ENCODE measurements at regions of chr16 and their contacts with region 1.

Region 1: GRCh38 chr16:3150346-3151218 is 15.8 kb downstream of the ZNF213 start:
- DNase-seq: peak; percentile 100
- H3K4me3 Mint-ChIP-seq: peak overlapping the region; percentile 88
- H3K27ac Mint-ChIP-seq: peak overlapping the region; percentile 89
- H3K4me1 Mint-ChIP-seq: peaks cover 27% of the 10 kb centered on the region
- H3K27me3 Mint-ChIP-seq: peaks cover 9% of the 10 kb centered on the region

Region 2: GRCh38 chr16:3106205-3106928 is 44.2 kb before region 1 on chr16:
- intact Hi-C with region 1: loop called (anchors 1 kb)
- DNase-seq: peak; percentile 97
- H3K4me3 Mint-ChIP-seq: peak overlapping the region; percentile 88
- H3K27ac Mint-ChIP-seq: peak overlapping the region; percentile 90
- H3K4me1 Mint-ChIP-seq: peaks cover 22% of the 10 kb centered on the region
- H3K27me3 Mint-ChIP-seq: peaks cover 2% of the 10 kb centered on the region

Region 3: GRCh38 chr16:3171855-3172593 is 21.4 kb after region 1 on chr16:
- intact Hi-C with region 1: loop called (anchors 1 kb)
- DNase-seq: peak; percentile 76
- H3K4me3 Mint-ChIP-seq: peak overlapping the region; percentile 80
- H3K27ac Mint-ChIP-seq: peak overlapping the region; percentile 83
- H3K4me1 Mint-ChIP-seq: peaks cover 34% of the 10 kb centered on the region
- H3K27me3 Mint-ChIP-seq: peaks cover 67% of the 10 kb centered on the region

Region 4: GRCh38 chr16:3264137-3265036 is 113.8 kb after region 1 on chr16:
- intact Hi-C with region 1: no loop called
- DNase-seq: peak; percentile 98
- H3K4me3 Mint-ChIP-seq: peak overlapping the region; percentile 85
- H3K27ac Mint-ChIP-seq: peak overlapping the region; percentile 94
- H3K4me1 Mint-ChIP-seq: peaks cover 15% of the 10 kb centered on the region
- H3K27me3 Mint-ChIP-seq: no peaks in the 10 kb centered on the region

Region 5: DNA sequence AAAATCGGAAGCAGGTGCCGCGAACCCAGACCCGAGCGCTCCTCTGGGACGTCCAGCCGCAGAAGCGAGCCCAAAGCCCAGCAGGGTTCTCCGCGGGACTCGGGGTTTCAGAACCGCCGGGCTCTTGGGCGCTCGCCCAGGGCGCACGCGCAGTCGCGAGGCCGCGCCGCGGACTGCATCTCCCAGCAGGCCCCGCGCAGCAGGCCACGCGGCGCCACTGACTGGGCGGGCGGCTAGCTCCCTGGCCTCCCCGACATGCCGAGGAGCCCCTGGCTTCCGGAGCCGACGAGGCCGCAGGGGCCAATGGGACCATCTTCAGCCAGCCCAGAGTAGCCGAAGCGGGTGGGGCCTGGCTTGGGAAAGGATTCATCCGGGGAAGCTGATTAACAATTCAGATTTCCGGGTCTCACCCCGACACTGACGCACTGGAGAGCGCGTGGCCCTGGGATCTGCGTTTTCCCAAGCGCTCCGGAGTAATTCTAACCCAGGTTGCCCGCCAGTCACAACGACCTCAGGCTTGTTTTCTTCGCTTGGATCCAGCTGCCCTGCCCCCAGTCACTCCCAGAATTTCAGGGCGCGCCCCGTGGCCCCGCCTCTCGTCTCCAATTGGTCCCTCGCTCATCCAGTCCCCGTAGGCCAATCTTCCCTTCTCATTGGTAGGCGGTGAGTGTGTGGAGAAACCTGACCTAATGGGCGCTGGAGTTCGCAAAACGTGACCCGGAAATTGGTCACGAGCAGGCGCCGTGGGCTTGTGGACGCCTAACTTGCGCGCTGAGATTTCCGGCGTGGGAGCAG is 132.3 kb after region 1 on chr16 and contains the start of gene ZNF263:
- intact Hi-C with region 1: loop called (anchors 5 kb)
- DNase-seq: peak; percentile 98
- H3K4me3 Mint-ChIP-seq: peak within 1 kb of the TSS; percentile 88
- H3K27ac Mint-ChIP-seq: peak within 1 kb of the TSS; percentile 98
- H3K4me1 Mint-ChIP-seq: peaks cover 18% of the 10 kb centered on the region
- H3K27me3 Mint-ChIP-seq: peaks cover 4% of the 10 kb centered on the region
- total RNA-seq, gene ZNF263: 27.0 and 31.3 TPM in 2 replicates

Region 6: DNA sequence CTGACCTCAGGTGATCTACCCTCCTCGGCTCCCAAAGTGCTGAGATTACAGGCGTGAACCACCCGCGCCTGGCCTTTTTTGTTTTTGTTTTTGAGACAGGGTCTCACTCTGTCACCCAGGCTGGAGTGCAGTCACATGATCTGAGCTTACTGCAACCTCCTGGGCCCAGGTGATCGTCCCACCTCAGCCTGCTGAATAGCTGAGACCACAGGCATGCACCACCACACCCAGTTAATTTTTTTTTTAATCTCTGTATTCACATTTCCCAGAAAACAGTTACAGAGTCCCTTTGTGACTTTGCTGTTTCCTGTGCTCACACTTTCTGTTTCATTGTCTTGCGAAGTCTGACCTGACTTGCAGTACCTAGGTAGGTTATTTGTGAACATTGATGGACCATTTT is 352.9 kb after region 1 on chr16:
- intact Hi-C with region 1: loop called (anchors 1 kb)
- DNase-seq: peak; percentile 92
- H3K4me3 Mint-ChIP-seq: peak overlapping the region; percentile 80
- H3K27ac Mint-ChIP-seq: peak overlapping the region; percentile 97
- H3K4me1 Mint-ChIP-seq: peaks cover 57% of the 10 kb centered on the region
- H3K27me3 Mint-ChIP-seq: no peaks in the 10 kb centered on the region

Measured in activated CD4-positive, alpha-beta T cell treated with anti-CD3 and anti-CD28 coated beads, Interleukin-2, amount 10 ng/mL, durations not matched to agents 24 days and 14 days (primary cell).